CD8-positive, alpha-beta T cell (primary cell): ENCODE measurements at regions of chr20 and their contacts with region 1.

Region 1: DNA sequence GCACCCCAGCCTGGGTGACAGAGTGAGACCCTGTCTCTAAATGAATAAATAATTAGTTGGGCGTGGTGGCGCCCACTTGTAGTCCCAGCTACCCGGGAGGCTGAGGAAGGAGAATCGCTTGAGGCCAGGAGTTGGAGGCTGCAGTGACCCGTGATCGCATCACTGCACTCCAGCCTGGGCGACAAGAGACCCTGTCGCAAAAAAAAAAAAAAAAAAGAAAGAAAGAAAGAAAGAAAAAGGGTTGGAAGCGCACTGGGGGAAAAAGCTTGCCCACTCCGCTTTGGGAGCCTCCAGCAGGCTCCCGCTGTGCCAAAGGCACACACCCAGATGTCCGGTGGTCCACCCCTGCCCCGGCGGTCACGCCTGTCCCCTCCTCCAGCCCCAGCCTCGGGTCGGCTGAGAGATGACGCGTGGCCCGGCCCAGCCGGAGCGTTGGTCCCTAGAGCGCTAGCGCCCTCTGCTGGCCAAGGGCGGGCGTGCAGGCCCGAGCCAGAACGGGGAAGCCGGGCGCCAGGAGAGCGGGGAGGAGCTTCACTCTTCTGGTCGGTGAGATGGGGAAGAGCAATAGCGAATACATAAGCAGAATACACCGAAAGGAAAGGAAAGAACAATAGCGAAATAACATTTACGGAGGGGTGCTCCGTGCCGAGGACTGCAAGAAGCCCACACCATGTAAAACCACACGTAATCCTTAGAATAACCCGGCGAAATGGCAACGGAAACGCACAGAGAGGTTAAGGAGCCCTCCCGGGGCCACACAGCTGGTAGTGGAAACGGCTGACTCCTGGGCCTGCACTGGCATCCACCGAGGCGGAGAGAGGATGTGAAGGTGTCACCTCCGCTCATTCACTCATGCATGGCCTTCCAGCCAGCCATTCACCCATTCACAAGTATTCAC is 41.7 kb downstream of the UBE2V1 start:
- DNase-seq: peak; percentile 83 to 98 (median 91)
- ATAC-seq: peak; percentile 100
- H3K4me3 ChIP-seq: peak overlapping the region; percentile 29 to 38
- H3K4me3 Mint-ChIP-seq: peak overlapping the region; percentile 63
- H3K27ac ChIP-seq: no peak overlapping the region
- H3K27ac Mint-ChIP-seq: no peak overlapping the region
- H3K4me1 ChIP-seq: no peaks in the 10 kb centered on the region
- H3K4me1 Mint-ChIP-seq: peaks cover 4% of the 10 kb centered on the region
- H3K27me3 ChIP-seq: no peaks in the 10 kb centered on the region
- H3K27me3 Mint-ChIP-seq: no peaks in the 10 kb centered on the region
- CTCF ChIP-seq: peak; percentile 98

Region 2: GRCh38 chr20:49541733-49542513 is 529.3 kb before region 1 on chr20:
- CTCF ChIA-PET with region 1: no interaction called
- POLR2A ChIA-PET with region 1: no interaction called
- intact Hi-C with region 1: loop called in 1 of 2 experiments (anchors 5 kb)
- DNase-seq: peak; percentile 23 to 78 (median 47)
- ATAC-seq: peak; percentile 65
- H3K4me3 ChIP-seq: no peak overlapping the region
- H3K4me3 Mint-ChIP-seq: no peak overlapping the region
- H3K27ac ChIP-seq: no peak overlapping the region
- H3K27ac Mint-ChIP-seq: no peak overlapping the region
- H3K4me1 ChIP-seq: no peaks in the 10 kb centered on the region
- H3K4me1 Mint-ChIP-seq: peaks cover 3% of the 10 kb centered on the region
- H3K27me3 ChIP-seq: peaks cover 0 to under 1% of the 10 kb centered on the region in 2 experiments
- H3K27me3 Mint-ChIP-seq: peaks cover 14% of the 10 kb centered on the region
- CTCF ChIP-seq: peak; percentile 53

Region 3: GRCh38 chr20:49888345-49888966 is 182.8 kb before region 1 on chr20:
- CTCF ChIA-PET with region 1: no interaction called
- POLR2A ChIA-PET with region 1: no interaction called
- intact Hi-C with region 1: no loop called
- DNase-seq: peak; percentile 31 to 68 (median 58)
- ATAC-seq: peak; percentile 64
- H3K4me3 ChIP-seq: no peak overlapping the region
- H3K4me3 Mint-ChIP-seq: no peak overlapping the region
- H3K27ac ChIP-seq: no peak overlapping the region
- H3K27ac Mint-ChIP-seq: no peak overlapping the region
- H3K4me1 ChIP-seq: no peaks in the 10 kb centered on the region
- H3K4me1 Mint-ChIP-seq: peaks cover 2% of the 10 kb centered on the region
- H3K27me3 ChIP-seq: no peaks in the 10 kb centered on the region
- H3K27me3 Mint-ChIP-seq: no peaks in the 10 kb centered on the region
- CTCF ChIP-seq: peak; percentile 66

Region 4: DNA sequence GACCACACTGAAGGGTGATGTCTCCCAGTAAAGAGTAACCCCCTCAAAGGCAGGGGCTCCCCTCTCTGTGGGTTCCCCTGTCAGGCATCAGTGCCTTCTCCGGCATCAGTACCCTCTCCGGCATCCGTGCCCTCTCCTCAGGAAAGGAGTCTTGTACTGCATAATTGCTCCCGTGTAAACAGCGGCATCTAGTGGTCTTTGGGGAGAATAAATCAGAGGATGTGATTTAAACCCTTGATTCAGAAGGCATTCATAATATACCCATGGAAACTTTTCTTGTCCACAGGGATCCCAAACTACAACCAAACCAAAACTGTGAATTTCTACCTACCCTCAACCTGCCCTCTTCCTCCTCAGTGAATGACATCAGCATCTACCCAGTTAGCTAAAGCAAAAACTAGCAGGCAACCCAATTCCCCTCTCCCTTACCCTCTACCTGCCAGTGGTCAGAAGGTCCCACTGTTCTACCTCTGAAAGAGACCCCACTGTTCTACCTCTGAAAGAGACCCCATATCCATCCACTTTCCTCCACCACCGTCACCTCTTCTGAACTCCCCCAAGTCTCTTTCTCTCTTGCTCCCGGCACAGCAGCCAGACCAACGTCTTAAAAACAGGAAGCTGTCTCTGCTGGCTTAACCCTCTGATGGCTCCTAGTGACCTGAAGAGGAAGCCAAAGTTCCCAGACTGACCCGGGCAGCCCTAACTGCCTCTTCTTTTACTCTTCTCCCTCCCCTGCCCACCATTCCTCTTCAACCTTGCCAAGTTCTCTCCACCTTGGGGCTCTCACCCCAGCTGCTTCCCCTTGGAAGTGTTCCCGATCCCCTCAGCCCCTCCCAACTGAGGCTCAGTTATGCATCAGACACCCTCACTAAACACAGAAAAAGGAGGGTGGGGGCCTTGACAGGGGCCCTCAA is 14.5 kb after region 1 on chr20:
- CTCF ChIA-PET with region 1: interaction called, 88 read pairs
- POLR2A ChIA-PET with region 1: interaction called, 6 read pairs
- intact Hi-C with region 1: loop called in 1 of 2 experiments (anchors 2 kb)
- DNase-seq: peak in 8 of 9 experiments; percentile 20 to 75 (median 38)
- ATAC-seq: peak; percentile 84
- H3K4me3 ChIP-seq: peak overlapping the region; percentile 29 to 38
- H3K4me3 Mint-ChIP-seq: peak overlapping the region; percentile 82
- H3K27ac ChIP-seq: peak overlapping the region; percentile 5 to 50
- H3K27ac Mint-ChIP-seq: peak overlapping the region; percentile 88
- H3K4me1 ChIP-seq: peaks cover 12% of the 10 kb centered on the region
- H3K4me1 Mint-ChIP-seq: peaks cover 35% of the 10 kb centered on the region
- H3K27me3 ChIP-seq: no peaks in the 10 kb centered on the region
- H3K27me3 Mint-ChIP-seq: no peaks in the 10 kb centered on the region
- CTCF ChIP-seq: peak; percentile 83

Region 5: DNA sequence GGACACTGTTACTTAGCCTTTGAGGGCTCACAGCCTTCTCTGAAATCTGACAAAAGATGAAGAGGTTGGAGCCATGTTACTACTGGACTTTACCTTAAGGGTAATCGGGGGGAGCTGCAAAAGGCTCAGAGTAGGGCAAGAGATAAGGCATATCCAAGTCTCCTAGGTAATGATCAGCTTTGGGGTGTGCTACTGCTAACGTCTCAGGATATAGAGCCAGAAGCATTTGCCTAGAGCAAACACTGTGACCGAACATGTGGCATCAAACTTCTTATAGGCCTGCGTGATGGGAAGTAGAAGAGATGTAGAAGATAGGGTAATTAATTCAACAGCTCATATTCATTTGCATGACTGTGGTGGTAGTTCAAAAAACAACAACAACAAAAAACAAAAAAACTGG is 30.6 kb after region 1 on chr20:
- CTCF ChIA-PET with region 1: interaction called, 29 read pairs
- POLR2A ChIA-PET with region 1: no interaction called
- intact Hi-C with region 1: no loop called
- DNase-seq: no peak
- ATAC-seq: no peak
- H3K4me3 ChIP-seq: no peak overlapping the region
- H3K4me3 Mint-ChIP-seq: no peak overlapping the region
- H3K27ac ChIP-seq: no peak overlapping the region
- H3K27ac Mint-ChIP-seq: peak overlapping the region; percentile 12
- H3K4me1 ChIP-seq: peaks cover 15% of the 10 kb centered on the region
- H3K4me1 Mint-ChIP-seq: peaks cover 67% of the 10 kb centered on the region
- H3K27me3 ChIP-seq: no peaks in the 10 kb centered on the region
- H3K27me3 Mint-ChIP-seq: no peaks in the 10 kb centered on the region
- CTCF ChIP-seq: no peak

Region 6: GRCh38 chr20:50153485-50154377 is 82.5 kb after region 1 on chr20 and contains the start of gene PEDS1:
- CTCF ChIA-PET with region 1: interaction called, 5 read pairs
- POLR2A ChIA-PET with region 1: no interaction called
- intact Hi-C with region 1: loop called in 1 of 2 experiments (anchors 1 kb)
- DNase-seq: peak; percentile 55 to 92 (median 80)
- ATAC-seq: peak; percentile 93
- H3K4me3 ChIP-seq: peak within 1 kb of the TSS; percentile 89 to 92
- H3K4me3 Mint-ChIP-seq: peak within 1 kb of the TSS; percentile 90
- H3K27ac ChIP-seq: peak within 1 kb of the TSS; percentile 77 to 78
- H3K27ac Mint-ChIP-seq: peak within 1 kb of the TSS; percentile 91
- H3K4me1 ChIP-seq: peaks cover 36% of the 10 kb centered on the region
- H3K4me1 Mint-ChIP-seq: peaks cover 43% of the 10 kb centered on the region
- H3K27me3 ChIP-seq: no peaks in the 10 kb centered on the region
- H3K27me3 Mint-ChIP-seq: no peaks in the 10 kb centered on the region
- CTCF ChIP-seq: no peak
- total RNA-seq, gene PEDS1: 19.0 to 20.8 TPM

Region 7: DNA sequence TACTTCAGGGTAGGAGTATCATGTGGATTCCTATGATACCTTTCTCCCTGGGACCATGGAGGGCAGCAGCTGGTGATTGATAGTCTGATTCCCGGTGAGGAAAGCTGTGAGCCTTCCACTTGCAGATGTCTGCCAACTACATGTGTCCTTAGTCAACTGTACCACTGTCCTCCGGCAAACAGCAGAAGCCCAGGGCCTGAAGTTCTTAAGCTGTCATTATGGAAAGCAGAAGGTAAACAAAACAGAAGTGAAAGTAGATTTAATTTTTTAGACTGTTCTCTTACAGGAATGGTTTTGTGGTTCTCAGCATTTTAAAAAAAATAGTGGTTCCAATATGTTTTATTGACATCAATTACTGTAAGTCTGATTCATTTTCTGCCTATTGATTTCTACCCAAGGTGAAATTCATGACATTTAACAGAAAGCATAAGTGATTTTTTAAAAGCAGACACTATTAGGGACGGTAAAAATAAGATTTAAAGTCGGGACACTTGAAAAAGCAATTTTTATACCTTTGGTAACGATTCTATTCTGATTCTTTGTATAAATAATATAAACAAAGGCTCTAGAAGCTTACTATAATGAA is 475.6 kb after region 1 on chr20:
- CTCF ChIA-PET with region 1: no interaction called
- POLR2A ChIA-PET with region 1: no interaction called
- intact Hi-C with region 1: no loop called
- DNase-seq: peak in 1 of 9 experiments; percentile 31
- ATAC-seq: peak; percentile 52
- H3K4me3 ChIP-seq: peak overlapping the region in 1 of 2 experiments; percentile 0
- H3K4me3 Mint-ChIP-seq: peak overlapping the region; percentile 68
- H3K27ac ChIP-seq: peak overlapping the region in 1 of 2 experiments; percentile 45
- H3K27ac Mint-ChIP-seq: peak overlapping the region; percentile 78
- H3K4me1 ChIP-seq: peaks cover 40% of the 10 kb centered on the region
- H3K4me1 Mint-ChIP-seq: peaks cover 75% of the 10 kb centered on the region
- H3K27me3 ChIP-seq: no peaks in the 10 kb centered on the region
- H3K27me3 Mint-ChIP-seq: no peaks in the 10 kb centered on the region
- CTCF ChIP-seq: no peak